ENCODE measurements at regions of chr1 and their contacts with region 1.

Region 1: DNA sequence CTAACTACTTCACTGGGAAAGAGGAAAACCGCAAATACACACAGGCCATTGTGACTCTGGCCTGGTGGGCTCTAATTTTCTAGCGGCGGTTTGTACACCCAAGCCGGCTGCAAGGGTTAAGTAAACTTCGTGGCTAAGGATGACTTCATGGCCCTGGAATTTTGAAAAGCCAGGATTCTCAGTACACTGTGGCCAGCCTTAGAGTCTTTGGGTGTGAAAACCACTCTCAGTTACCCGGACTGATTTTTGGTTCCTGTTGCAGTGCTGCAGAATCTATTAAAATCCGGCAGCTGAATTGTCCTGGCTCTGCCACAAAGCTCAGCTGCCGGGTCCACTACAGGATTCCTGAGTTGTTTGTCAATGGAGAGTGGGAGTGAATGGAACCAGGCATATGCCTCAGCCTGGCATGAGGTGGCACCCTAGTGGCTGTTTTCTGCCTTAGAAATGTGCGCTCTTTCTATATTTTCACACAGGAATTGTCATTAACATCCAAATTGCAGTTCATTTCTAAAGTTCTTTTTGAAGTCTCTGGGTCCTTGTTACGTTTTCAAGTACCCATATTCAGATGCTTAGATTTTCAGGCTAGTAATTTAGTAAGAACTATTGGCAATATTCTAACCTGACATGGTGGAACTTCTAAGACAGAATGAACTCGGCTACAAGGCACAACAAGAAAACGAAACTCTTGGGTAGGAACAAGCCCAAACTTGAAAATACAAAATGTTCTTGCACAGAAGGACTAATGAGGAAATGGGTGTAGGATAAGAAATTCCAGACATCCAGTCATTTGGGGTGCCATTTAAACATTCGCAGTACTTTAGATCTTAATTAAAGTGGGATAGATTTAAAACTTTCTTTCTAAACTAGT is 255.9 kb downstream of the NFIA start:
- DNase-seq: peak; percentile 94
- H3K4me3 ChIP-seq: peak overlapping the region; percentile 27 to 49 (median 45)
- H3K27ac ChIP-seq: peak overlapping the region; percentile 95
- H3K4me1 ChIP-seq: peaks cover 24% of the 10 kb centered on the region
- H3K27me3 ChIP-seq: no peaks in the 10 kb centered on the region
- CTCF ChIP-seq: peak; percentile 86 to 91

Region 2: GRCh38 chr1:60655679-60656355 is 682.4 kb before region 1 on chr1:
- CTCF ChIA-PET with region 1: no interaction called
- dilution Hi-C with region 1: no loop called
- in situ Hi-C with region 1: no loop called
- intact Hi-C with region 1: no loop called
- DNase-seq: no peak
- H3K4me3 ChIP-seq: no peak overlapping the region
- H3K27ac ChIP-seq: no peak overlapping the region
- H3K4me1 ChIP-seq: no peaks in the 10 kb centered on the region
- H3K27me3 ChIP-seq: no peaks in the 10 kb centered on the region
- CTCF ChIP-seq: no peak

Region 3: DNA sequence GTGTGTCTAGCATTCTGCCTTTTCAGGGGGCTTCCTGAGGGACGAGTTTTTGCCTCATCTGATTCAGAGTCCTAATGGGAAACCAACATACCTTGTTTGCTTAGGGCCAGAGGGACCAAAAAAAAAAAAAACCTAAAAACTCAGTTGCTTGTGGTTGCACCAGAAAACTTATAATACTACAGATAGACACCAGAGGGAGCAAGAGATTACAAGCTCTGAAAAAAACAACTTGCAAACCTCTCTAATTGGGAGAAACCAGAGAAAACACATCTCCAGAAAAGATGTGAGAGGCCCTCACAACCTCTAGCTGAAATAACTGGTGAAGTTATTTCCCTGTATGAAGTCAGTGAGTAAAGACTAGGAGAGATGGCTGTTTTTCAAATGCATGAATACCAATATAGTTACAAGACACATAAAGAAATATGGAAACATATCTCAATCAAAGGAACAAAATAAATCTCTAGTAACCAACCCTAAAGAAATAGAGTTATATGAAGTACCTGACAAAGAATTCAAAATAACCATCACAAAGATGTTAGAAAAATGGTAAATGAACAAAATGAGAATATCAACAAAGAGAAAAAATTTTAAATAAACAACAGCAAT is 489.5 kb before region 1 on chr1:
- CTCF ChIA-PET with region 1: no interaction called
- dilution Hi-C with region 1: no loop called
- in situ Hi-C with region 1: no loop called
- intact Hi-C with region 1: loop called (anchors 2 kb)
- DNase-seq: peak; percentile 20
- H3K4me3 ChIP-seq: no peak overlapping the region
- H3K27ac ChIP-seq: no peak overlapping the region
- H3K4me1 ChIP-seq: peaks cover 5% of the 10 kb centered on the region
- H3K27me3 ChIP-seq: no peaks in the 10 kb centered on the region
- CTCF ChIP-seq: peak; percentile 45 to 71

Region 4: DNA sequence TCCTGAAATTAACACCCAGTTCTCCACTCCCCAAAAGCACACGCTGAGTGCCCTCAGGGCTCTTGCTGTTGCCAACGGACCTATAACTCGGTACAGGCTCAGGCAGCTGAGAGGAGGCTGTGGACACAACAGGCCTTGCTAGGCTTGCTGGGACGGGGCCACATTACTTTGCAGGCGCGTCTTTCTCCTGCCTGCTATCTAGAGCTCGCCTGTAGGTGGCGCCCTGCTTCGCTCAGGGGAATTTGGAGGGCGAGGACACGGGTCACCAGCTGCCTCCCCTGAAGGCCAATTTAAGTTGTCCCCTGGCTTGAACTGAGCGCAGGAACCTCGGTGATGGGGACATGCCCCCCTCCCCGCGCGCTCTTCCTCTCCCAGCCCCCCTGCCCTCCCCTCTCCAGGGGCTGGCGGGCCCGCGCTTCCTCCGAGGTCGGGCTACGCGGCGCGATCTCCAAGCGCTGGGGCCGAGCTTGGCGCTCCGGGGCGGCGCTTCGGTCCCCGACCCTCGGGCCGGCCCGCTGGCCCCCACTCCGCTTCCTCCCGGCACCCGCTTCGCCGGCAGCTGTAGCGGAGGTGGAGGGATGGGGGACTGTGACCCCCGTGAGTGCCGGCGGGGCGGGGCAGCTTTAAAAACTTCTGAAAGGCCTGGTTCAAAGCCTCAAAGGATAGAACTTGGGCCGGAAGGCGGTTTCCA is 288.2 kb before region 1 on chr1:
- CTCF ChIA-PET with region 1: no interaction called
- dilution Hi-C with region 1: no loop called
- in situ Hi-C with region 1: no loop called
- intact Hi-C with region 1: loop called (anchors 1 kb)
- DNase-seq: peak; percentile 80
- H3K4me3 ChIP-seq: peak overlapping the region; percentile 56 to 72 (median 65)
- H3K27ac ChIP-seq: no peak overlapping the region
- H3K4me1 ChIP-seq: peaks cover 19% of the 10 kb centered on the region
- H3K27me3 ChIP-seq: no peaks in the 10 kb centered on the region
- CTCF ChIP-seq: peak; percentile 91 to 98

Region 5: GRCh38 chr1:61202854-61203598 is 135.2 kb before region 1 on chr1:
- CTCF ChIA-PET with region 1: no interaction called
- dilution Hi-C with region 1: no loop called
- in situ Hi-C with region 1: no loop called
- intact Hi-C with region 1: loop called (anchors 5 kb)
- DNase-seq: peak; percentile 53
- H3K4me3 ChIP-seq: peak overlapping the region; percentile 30 to 37 (median 32)
- H3K27ac ChIP-seq: peak overlapping the region; percentile 26
- H3K4me1 ChIP-seq: no peaks in the 10 kb centered on the region
- H3K27me3 ChIP-seq: no peaks in the 10 kb centered on the region
- CTCF ChIP-seq: no peak

Region 6: DNA sequence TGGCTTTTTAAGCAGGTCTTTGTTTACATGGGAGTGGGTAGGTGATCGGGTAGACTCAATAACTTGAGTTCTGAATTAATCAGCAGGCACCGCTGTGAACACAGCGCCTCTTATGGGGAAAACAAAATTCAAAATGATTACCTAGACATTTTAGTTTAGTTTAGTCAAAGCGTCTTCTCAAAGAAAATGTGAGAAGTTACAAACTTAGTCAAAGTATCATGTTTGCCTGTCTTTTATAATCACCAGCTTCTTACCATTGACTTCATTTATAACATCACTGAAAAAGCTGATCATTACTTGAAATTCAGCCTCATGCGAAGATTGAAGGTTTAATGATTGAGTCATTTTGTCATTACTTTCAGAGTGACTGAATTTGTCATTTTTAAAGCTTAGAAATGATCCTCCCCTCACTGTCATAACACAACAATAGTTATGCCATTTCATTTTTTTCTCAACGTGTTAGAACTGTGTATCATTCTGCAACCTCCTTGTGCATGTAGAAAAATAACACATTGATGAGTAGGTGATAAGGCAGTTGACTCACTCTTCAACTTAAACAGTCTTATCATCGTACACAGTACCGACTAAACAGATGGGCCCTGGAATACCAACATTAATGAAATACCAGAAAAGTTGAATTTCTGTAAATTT is 67.3 kb before region 1 on chr1:
- CTCF ChIA-PET with region 1: no interaction called
- dilution Hi-C with region 1: no loop called
- in situ Hi-C with region 1: no loop called
- intact Hi-C with region 1: no loop called
- DNase-seq: no peak
- H3K4me3 ChIP-seq: no peak overlapping the region
- H3K27ac ChIP-seq: no peak overlapping the region
- H3K4me1 ChIP-seq: no peaks in the 10 kb centered on the region
- H3K27me3 ChIP-seq: no peaks in the 10 kb centered on the region
- CTCF ChIP-seq: no peak

Region 7: DNA sequence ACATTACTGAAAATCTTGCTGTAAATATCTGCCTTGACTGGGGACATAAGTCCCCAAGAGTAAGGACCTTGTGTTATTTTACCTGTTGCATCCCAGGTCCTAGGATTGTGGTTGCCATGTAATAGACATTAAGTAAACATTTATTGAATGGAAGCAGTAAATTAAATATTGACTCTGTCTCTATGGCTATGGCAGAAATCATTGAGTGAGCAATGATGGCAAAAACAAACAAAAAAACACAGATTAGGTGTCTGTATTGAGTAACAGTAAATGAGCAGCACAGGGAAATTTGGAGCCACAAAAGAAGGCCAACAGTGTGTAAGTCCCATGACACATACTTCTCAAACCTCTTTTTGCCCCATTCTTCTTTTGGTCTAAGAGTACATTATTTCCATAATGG is 15.4 kb before region 1 on chr1:
- CTCF ChIA-PET with region 1: no interaction called
- dilution Hi-C with region 1: no loop called
- in situ Hi-C with region 1: no loop called
- intact Hi-C with region 1: loop called (anchors 1 kb)
- DNase-seq: peak; percentile 77
- H3K4me3 ChIP-seq: no peak overlapping the region
- H3K27ac ChIP-seq: peak overlapping the region; percentile 91
- H3K4me1 ChIP-seq: peaks cover 46% of the 10 kb centered on the region
- H3K27me3 ChIP-seq: no peaks in the 10 kb centered on the region
- CTCF ChIP-seq: no peak

Region 8: DNA sequence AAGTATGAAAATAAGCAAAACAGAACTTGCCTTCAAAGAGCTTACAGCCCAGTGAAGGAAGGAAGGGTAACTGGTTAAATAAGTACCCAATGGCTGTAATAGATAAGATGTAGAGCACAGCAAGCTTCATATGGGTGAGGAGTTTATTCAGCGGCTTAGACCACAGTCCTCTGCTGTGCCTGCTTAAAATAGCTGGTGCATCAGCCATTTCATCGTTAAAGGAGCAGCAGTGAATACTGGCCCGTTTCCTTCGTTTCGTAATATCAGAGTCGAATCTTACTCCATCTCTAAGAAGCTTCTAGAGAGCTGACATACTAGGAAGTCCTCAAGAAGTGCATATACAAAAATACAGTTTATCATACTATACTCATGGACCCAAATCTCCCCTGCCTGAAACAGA is 30.7 kb after region 1 on chr1:
- CTCF ChIA-PET with region 1: no interaction called
- dilution Hi-C with region 1: no loop called
- in situ Hi-C with region 1: no loop called
- intact Hi-C with region 1: no loop called
- DNase-seq: no peak
- H3K4me3 ChIP-seq: no peak overlapping the region
- H3K27ac ChIP-seq: no peak overlapping the region
- H3K4me1 ChIP-seq: no peaks in the 10 kb centered on the region
- H3K27me3 ChIP-seq: no peaks in the 10 kb centered on the region
- CTCF ChIP-seq: no peak

Region 9: DNA sequence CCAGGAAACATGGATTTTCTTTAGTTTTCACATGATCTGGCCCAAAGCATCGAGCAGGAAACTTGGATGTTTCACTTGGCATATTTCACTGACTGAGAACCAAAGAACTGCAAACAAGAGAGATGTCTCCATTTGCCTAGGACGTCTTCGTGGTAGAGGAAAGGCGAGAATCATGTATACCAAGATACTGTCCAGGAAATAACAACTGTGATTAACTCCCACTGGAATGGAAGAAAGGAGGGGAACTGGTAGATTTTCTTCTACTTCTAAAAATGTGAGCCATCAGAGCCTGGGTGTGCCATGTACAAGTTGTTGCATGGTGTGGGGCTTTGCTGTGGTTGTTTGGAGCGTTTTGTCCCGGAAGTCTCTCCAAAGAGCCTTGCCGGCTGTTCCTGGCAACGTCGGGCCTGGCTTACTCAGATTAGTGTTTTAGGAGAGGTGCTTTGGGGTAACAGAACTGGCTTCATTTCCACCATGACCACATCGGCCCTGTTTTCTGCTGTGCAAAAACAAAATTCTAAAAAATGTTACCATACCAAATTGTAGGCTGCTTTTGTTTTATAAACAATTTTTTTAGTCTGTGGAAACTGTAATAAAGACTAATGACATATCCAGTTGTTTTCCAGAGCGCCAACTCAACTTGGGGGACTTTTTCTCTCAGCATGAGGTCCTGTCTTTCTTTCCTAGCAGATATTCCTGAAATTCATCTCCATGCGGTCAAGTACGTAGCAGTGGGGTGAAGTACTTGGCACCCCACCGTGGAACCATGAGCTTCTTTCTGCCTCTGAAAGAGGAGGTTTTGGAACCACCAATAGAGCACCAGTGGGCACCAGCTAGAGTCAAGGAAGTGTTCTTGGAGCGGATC is 268.5 kb after region 1 on chr1:
- CTCF ChIA-PET with region 1: no interaction called
- dilution Hi-C with region 1: no loop called
- in situ Hi-C with region 1: no loop called
- intact Hi-C with region 1: loop called (anchors 5 kb)
- DNase-seq: peak; percentile 76
- H3K4me3 ChIP-seq: peak overlapping the region in 2 of 3 experiments; percentile 3 to 5
- H3K27ac ChIP-seq: peak overlapping the region; percentile 93
- H3K4me1 ChIP-seq: peaks cover 27% of the 10 kb centered on the region
- H3K27me3 ChIP-seq: no peaks in the 10 kb centered on the region
- CTCF ChIP-seq: no peak

Measured in mammary epithelial cell (primary cell).